HepG2 (cell line): ENCODE measurements at regions of chr11 and their contacts with region 1.

Region 1: GRCh38 chr11:90453525-90453924 is 230.7 kb upstream of the CHORDC1 start:
- DNase-seq: no peak
- ATAC-seq: no peak
- H3K4me3 ChIP-seq: no peak overlapping the region
- H3K27ac ChIP-seq: no peak overlapping the region
- H3K4me1 ChIP-seq: 0 out of 2 replicates have a peak, but pooled peaks cover under 1% of the 10 kb centered on the region
- H3K27me3 ChIP-seq: no peaks in the 10 kb centered on the region
- CTCF ChIP-seq: no peak
- EP300 ChIP-seq: no peak
- POLR2A ChIP-seq: no peak
- RAD21 ChIP-seq: no peak

Region 2: DNA sequence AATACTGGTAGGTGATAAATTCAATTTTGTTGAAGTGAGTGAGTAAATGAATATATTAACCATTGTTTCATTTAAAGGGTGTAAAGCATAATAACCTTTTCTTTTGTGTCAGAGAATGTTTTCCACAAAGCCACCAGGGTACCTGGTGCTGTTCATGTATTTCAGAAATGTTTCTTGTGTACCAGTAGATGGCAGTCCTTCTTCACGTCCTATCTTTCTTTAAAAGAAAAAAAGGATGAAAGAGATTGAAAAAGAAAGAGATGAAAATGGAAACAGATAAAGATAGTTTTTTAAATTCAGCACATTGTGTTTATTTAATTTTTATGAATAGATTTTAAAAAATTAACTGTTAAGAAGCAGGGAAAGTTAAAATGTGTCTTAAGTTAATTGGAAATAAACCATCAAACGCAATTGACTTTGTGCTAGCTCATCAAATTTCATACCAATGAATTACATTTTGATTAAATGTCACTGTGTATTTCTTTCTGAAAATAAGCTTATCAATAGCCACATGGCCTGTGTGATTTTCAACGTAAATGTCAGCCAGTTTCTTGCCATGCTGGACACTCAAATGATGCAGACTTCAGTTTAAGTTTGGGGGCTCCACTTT is 165.2 kb before region 1 on chr11:
- CTCF ChIA-PET with region 1: interaction called, 13 read pairs
- POLR2A ChIA-PET with region 1: no interaction called
- in situ Hi-C with region 1: loop called (anchors 10 kb)
- intact Hi-C with region 1: no loop called
- DNase-seq: peak; percentile 33
- ATAC-seq: peak; percentile 71
- H3K4me3 ChIP-seq: no peak overlapping the region
- H3K27ac ChIP-seq: no peak overlapping the region
- H3K4me1 ChIP-seq: 0 out of 2 replicates have a peak, but pooled peaks cover 9% of the 10 kb centered on the region
- H3K27me3 ChIP-seq: no peaks in the 10 kb centered on the region
- CTCF ChIP-seq: peak; percentile 57
- EP300 ChIP-seq: no peak
- POLR2A ChIP-seq: no peak
- RAD21 ChIP-seq: peak; percentile 20; the same call in 1 of the 2 replicates

Region 3: DNA sequence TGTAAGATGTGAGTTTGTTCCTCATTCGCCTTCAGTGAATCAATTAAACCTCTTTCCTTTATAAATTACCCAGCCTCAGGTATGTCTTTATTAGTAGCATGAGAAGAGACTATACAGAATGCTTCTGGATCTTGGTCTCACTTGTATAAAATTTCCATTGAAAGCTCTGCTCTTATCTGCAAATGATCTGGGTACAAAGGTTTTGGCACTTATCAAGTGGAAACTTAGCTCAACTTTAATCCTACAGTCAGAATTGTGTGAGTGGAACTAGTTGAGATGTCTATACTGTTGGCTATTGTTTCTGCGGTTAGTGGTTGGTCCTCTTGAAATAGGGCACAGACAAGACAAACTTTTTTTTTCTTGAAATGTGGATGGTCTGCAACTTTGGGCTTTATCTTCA is 159.4 kb before region 1 on chr11:
- CTCF ChIA-PET with region 1: interaction called, 13 read pairs
- POLR2A ChIA-PET with region 1: no interaction called
- in situ Hi-C with region 1: loop called (anchors 10 kb)
- intact Hi-C with region 1: no loop called
- DNase-seq: peak; percentile 6
- ATAC-seq: no peak
- H3K4me3 ChIP-seq: no peak overlapping the region
- H3K27ac ChIP-seq: no peak overlapping the region
- H3K4me1 ChIP-seq: peaks cover 5% of the 10 kb centered on the region; the same call in 1 of the 2 replicates
- H3K27me3 ChIP-seq: no peaks in the 10 kb centered on the region; a peak in 1 of 5 replicates
- CTCF ChIP-seq: no peak
- EP300 ChIP-seq: no peak
- POLR2A ChIP-seq: no peak
- RAD21 ChIP-seq: no peak